ENCODE measurements at regions of chr17 and their contacts with region 1.

Region 1: DNA sequence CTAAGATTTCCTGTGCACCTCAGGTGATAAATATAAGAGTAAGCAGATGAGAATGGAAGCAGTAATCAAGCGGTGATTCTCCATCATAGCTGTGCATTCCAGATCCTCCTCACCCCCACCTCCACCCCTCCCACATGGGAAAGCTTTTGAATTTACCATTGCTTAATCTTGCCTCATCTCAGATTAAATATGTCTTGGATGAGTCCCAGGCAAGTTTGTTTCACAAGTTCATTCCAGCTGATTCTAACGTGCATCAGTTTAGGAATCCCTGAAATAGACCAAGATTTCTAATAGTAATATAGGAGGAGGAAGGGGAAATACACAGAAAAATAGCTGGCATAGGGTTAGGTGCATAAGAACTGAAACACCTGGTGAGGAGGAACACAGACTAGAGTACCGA is 396.2 kb upstream of the KIF2B start:
- DNase-seq: no peak
- H3K4me3 ChIP-seq: no peak overlapping the region
- H3K27ac ChIP-seq: no peak overlapping the region
- H3K4me1 ChIP-seq: no peaks in the 10 kb centered on the region
- H3K27me3 ChIP-seq: no peaks in the 10 kb centered on the region
- CTCF ChIP-seq: no peak
- EP300 ChIP-seq: no peak
- POLR2A ChIP-seq: no peak

Region 2: DNA sequence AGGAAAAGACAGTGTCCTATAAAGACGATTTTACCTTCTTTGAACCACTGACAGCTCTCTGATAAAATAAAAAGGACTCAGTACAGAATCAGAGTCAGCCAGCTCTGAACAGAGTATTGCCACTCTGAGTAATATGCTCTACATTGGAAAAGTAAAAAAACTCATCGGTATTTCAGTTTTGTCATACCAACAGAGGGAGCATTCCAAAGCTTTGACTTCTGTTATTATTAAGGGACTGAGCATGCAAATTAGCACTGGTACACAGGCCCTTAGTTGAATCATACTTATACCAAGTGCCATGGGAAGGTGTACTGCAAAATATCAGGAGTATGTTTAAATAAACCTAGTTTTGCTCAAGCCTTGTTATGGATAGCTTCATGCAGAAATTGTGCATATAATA is 112.8 kb before region 1 on chr17:
- in situ Hi-C with region 1: no loop called
- intact Hi-C with region 1: no loop called
- DNase-seq: no peak
- H3K4me3 ChIP-seq: no peak overlapping the region
- H3K27ac ChIP-seq: no peak overlapping the region
- H3K4me1 ChIP-seq: no peaks in the 10 kb centered on the region
- H3K27me3 ChIP-seq: no peaks in the 10 kb centered on the region
- CTCF ChIP-seq: no peak
- EP300 ChIP-seq: no peak
- POLR2A ChIP-seq: no peak

Region 3: GRCh38 chr17:53336281-53336680 is 90.2 kb before region 1 on chr17:
- in situ Hi-C with region 1: loop called in 1 of 4 experiments (anchors 25 kb)
- intact Hi-C with region 1: no loop called
- DNase-seq: no peak
- H3K4me3 ChIP-seq: no peak overlapping the region
- H3K27ac ChIP-seq: no peak overlapping the region
- H3K4me1 ChIP-seq: no peaks in the 10 kb centered on the region
- H3K27me3 ChIP-seq: no peaks in the 10 kb centered on the region
- CTCF ChIP-seq: no peak
- EP300 ChIP-seq: no peak
- POLR2A ChIP-seq: no peak

Measured in transverse colon (tissue), 4 donors.